CD4-positive, alpha-beta memory T cell (primary cell): ENCODE measurements at regions of chr11 and their contacts with region 1.

Region 1: DNA sequence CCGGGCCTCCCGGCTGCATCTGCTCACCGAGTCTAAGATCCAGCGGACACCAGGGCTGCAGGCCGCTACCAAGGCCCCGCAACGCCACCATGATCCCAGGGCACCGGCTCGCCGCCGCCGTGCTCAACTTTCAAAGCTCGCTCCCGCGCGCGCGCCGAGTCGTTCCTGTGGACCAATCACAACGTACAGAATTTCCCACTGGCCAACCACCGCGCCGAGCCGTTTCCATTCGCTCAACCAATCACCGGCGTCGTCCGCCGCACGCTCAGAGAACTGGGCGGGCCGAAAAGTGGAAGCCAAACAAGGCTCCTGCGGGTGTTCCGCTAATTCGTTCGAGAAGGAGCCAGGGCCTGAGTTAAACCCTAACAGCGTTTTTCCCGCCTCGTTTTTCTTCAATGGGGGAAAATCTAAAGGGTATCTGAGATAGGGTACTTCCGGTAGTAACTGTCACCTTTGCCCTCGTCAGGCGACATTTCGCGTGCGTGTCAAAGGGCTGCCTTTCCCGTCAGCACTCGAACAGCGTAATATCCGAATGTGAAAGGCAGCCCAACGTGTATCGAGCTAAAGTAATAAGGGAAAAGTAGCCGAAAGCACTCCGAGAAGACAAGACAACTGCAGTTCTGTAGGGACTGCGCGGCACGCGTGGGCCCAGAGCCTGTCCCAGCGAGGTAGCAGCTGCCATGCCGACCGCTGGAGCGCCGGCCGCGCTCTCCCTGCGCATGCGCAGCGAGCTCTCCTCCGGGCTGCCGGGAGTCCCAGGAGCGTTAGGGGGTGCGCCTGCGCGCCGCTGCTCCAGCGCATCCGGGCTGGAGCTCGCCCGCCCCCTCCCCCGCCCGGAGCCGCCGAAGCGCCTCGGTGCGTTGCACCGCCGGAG is at the starts of genes NCAPD3 and VPS26B:
- DNase-seq: peak; percentile 95 to 96 (median 95)
- H3K4me3 ChIP-seq: peak within 1 kb of the TSS; percentile 83 to 100
- H3K4me3 Mint-ChIP-seq: peak within 1 kb of the TSS; percentile 93 to 98 (median 96)
- H3K27ac ChIP-seq: peak within 1 kb of the TSS; percentile 95
- H3K27ac Mint-ChIP-seq: peak within 1 kb of the TSS; percentile 98 to 99 (median 99)
- H3K4me1 ChIP-seq: peaks cover 53% of the 10 kb centered on the region
- H3K4me1 Mint-ChIP-seq: peaks cover 42 to 69% (median 52%) of the 10 kb centered on the region in 4 donors
- H3K27me3 ChIP-seq: no peaks in the 10 kb centered on the region
- H3K27me3 Mint-ChIP-seq: no peaks in the 10 kb centered on the region
- total RNA-seq, gene NCAPD3: 39.9 to 41.8 TPM
- total RNA-seq, gene VPS26B: 72.2 to 76.6 TPM

Region 2: DNA sequence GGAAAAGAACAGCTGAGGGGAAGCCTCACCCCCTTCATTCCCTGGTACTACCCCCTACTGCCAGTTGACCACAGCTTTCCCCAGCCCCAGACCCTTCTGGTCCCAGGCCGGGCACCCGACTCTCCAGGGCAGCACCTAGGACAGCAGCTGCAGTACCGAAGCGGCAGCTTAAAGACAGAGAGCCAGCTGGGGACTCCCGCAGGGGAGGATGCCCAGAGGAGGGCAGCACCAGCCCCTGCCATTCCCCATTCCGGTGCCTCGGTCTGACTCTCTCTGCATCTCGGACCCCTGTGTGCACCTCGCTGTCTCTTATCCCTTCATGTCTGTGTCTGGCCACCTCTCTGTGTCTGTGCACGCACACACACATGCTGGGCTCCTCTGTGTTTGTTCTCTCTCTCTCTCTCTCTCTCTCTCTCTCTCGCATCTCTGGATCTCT is 276.7 kb before region 1 on chr11:
- CTCF ChIA-PET with region 1: no interaction called
- POLR2A ChIA-PET with region 1: interaction called, 6 read pairs
- intact Hi-C with region 1: loop called (anchors 1 kb)
- DNase-seq: peak; percentile 70 to 81 (median 78)
- H3K4me3 ChIP-seq: peak overlapping the region; percentile 9 to 38
- H3K4me3 Mint-ChIP-seq: peak overlapping the region; percentile 56 to 90 (median 80)
- H3K27ac ChIP-seq: peak overlapping the region; percentile 12
- H3K27ac Mint-ChIP-seq: peak overlapping the region; percentile 81 to 97 (median 92)
- H3K4me1 ChIP-seq: peaks cover 73% of the 10 kb centered on the region
- H3K4me1 Mint-ChIP-seq: peaks cover 43 to 81% (median 62%) of the 10 kb centered on the region in 4 donors
- H3K27me3 ChIP-seq: no peaks in the 10 kb centered on the region
- H3K27me3 Mint-ChIP-seq: peaks cover 0 to 10% of the 10 kb centered on the region in 2 donors

Region 3: GRCh38 chr11:134181707-134182106 is 42.4 kb before region 1 on chr11:
- CTCF ChIA-PET with region 1: no interaction called
- POLR2A ChIA-PET with region 1: no interaction called
- intact Hi-C with region 1: no loop called
- DNase-seq: no peak
- H3K4me3 ChIP-seq: no peak overlapping the region
- H3K4me3 Mint-ChIP-seq: no peak overlapping the region
- H3K27ac ChIP-seq: no peak overlapping the region
- H3K27ac Mint-ChIP-seq: no peak overlapping the region
- H3K4me1 ChIP-seq: no peaks in the 10 kb centered on the region
- H3K4me1 Mint-ChIP-seq: no peaks in the 10 kb centered on the region
- H3K27me3 ChIP-seq: no peaks in the 10 kb centered on the region
- H3K27me3 Mint-ChIP-seq: no peaks in the 10 kb centered on the region

Region 4: DNA sequence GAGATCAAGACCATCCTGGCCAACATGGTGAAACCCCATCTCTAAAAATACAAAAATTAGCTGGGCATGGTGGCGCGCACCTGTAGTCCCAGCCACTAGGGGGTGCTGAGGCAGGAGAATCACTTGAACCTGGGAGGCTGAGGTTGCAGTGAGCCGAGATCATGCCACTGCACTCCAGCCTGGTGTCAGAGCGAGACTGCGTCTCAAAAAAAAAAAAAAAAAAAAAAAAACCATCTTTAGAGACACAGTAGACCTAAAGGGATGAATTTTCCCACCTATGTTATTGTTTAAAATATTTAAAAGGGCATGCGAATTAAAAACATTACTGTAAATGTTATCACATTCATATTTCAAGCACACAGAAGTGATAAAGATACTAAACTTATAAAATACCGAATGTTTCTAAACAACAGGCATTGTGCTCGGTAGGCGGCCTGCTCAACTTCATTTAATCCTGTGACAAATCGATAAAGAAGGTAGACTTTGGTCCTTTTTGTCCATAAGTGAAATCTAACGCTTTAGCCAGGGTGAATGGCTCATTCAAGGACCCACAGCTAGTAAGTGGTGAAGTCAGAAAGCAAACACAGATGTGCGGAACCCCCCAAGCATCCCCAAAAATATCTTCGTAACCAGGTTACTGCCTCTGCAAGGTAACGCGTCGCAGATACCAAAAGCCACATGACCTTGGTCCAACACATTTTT is 16.4 kb before region 1 on chr11:
- CTCF ChIA-PET with region 1: interaction called, 38 read pairs
- POLR2A ChIA-PET with region 1: interaction called, 14 read pairs
- intact Hi-C with region 1: loop called (anchors 1 kb)
- DNase-seq: peak; percentile 54 to 69 (median 64)
- H3K4me3 ChIP-seq: no peak overlapping the region
- H3K4me3 Mint-ChIP-seq: no peak overlapping the region
- H3K27ac ChIP-seq: no peak overlapping the region
- H3K27ac Mint-ChIP-seq: peak overlapping the region in 4 of 7 donors; percentile 17 to 24 (median 22)
- H3K4me1 ChIP-seq: no peaks in the 10 kb centered on the region
- H3K4me1 Mint-ChIP-seq: peaks cover 1 to 7% (median 5%) of the 10 kb centered on the region in 4 donors
- H3K27me3 ChIP-seq: no peaks in the 10 kb centered on the region
- H3K27me3 Mint-ChIP-seq: no peaks in the 10 kb centered on the region

Region 5: GRCh38 chr11:134244655-134245054 is 20.6 kb after region 1 on chr11:
- CTCF ChIA-PET with region 1: interaction called, 9 read pairs
- POLR2A ChIA-PET with region 1: interaction called, 92 read pairs
- intact Hi-C with region 1: loop called (anchors 2 kb)
- DNase-seq: peak in 2 of 5 donors; percentile 17 to 19
- H3K4me3 ChIP-seq: no peak overlapping the region
- H3K4me3 Mint-ChIP-seq: no peak overlapping the region
- H3K27ac ChIP-seq: no peak overlapping the region
- H3K27ac Mint-ChIP-seq: peak overlapping the region in 1 of 7 donors; percentile 43
- H3K4me1 ChIP-seq: no peaks in the 10 kb centered on the region
- H3K4me1 Mint-ChIP-seq: no peaks in the 10 kb centered on the region
- H3K27me3 ChIP-seq: no peaks in the 10 kb centered on the region
- H3K27me3 Mint-ChIP-seq: no peaks in the 10 kb centered on the region

Region 6: GRCh38 chr11:134275534-134276395 is 51.7 kb after region 1 on chr11 and contains the start of gene GLB1L3:
- CTCF ChIA-PET with region 1: interaction called, 8 read pairs
- POLR2A ChIA-PET with region 1: interaction called, 62 read pairs
- intact Hi-C with region 1: loop called (anchors 1 kb)
- DNase-seq: peak; percentile 77 to 85 (median 79)
- H3K4me3 ChIP-seq: peak within 1 kb of the TSS; percentile 85 to 87
- H3K4me3 Mint-ChIP-seq: peak within 1 kb of the TSS; percentile 93 to 98 (median 96)
- H3K27ac ChIP-seq: peak within 1 kb of the TSS; percentile 61
- H3K27ac Mint-ChIP-seq: peak within 1 kb of the TSS; percentile 82 to 95 (median 91)
- H3K4me1 ChIP-seq: peaks cover 37% of the 10 kb centered on the region
- H3K4me1 Mint-ChIP-seq: peaks cover 23 to 57% (median 41%) of the 10 kb centered on the region in 4 donors
- H3K27me3 ChIP-seq: no peaks in the 10 kb centered on the region
- H3K27me3 Mint-ChIP-seq: no peaks in the 10 kb centered on the region
- total RNA-seq, gene GLB1L3: 1.2 to 1.5 TPM